GM13976 (cell line): ENCODE measurements at regions of chr12 and their contacts with region 1.

Region 1: DNA sequence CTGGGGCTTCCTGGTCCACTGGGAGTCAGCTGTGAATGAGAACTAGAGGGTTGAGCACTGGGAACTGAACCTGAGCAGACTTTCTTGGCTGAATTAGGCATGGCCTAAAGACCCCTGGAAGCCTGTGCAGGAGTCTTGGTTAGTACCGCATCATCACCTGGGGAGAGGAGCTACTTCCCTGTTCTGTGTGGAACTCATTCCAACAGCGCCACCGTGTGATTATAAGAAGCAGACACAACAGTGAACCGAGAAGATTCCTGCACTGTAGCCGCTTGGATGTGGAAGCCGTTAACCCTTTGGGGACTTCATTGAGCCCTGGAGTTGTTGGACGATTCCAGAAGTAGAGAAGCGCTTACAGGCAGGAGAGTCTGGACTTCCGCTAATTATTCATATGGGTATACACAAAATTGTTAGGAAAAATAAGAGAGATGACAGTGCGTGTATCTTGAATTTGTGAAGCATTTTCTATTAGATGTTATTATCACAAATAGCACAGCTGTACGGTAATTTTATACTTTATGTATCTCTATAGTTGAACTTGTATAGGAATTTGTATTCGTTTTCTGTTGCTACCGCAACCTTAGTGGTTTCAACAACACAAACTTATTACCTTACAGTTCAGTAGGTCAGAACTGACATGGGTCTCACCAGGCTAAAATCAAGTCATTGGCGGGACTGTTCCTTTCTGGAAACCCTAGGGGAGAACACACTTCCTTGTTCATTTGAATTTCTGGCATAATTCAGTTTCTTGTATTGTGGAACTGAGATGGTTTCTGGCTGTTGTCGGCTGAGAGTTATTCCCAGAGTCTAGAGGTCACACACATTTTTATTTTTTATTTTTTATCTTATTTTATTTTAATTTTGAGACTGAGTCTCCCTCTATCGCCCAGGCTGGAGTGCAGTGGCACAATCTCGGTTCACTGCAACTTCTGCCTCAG is 100.7 kb downstream of the C2CD5 start:
- DNase-seq: peak; percentile 55
- CTCF ChIP-seq: peak; percentile 72

Region 2: GRCh38 chr12:22083167-22083566 is 360.5 kb before region 1 on chr12:
- in situ Hi-C with region 1: loop called (anchors 25 kb)
- DNase-seq: peak; percentile 24
- CTCF ChIP-seq: no peak

Region 3: DNA sequence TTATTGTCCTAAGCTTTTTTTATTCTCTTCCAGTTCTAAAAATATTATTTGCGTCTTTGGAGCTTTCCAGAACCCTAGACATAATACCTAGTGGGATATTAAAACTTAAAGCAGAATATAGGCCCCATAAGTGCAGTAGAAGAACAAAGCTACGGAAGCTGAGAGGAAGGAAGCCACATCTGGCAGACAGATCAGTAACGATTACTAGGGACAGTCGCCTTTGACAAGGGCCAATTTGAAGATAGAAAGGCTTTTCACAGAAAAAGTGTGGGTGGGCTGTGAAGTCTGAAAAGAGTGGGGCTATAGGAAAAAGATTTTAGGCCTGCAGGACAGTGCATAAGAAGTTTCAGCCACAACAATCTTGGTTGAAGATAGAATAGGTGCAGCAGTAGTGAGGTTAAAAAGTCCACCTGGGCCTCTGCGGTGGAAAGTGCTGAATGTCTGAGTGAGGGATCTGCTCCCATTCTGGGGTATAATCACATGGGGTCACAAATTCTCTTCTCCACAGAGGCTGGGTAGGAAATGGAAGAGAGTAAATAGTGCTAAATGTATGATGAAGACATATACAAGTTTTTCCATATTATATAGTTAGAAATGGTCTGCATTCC is 283.1 kb before region 1 on chr12:
- in situ Hi-C with region 1: no loop called
- DNase-seq: no peak
- CTCF ChIP-seq: no peak